ENCODE measurements at regions of chr5 and their contacts with region 1.

Region 1: GRCh38 chr5:132807163-132807838 is 5.8 kb upstream of the SOWAHA start:
- DNase-seq: peak; percentile 20
- ATAC-seq: peak; percentile 94
- H3K4me3 ChIP-seq: no peak overlapping the region
- H3K27ac ChIP-seq: no peak overlapping the region
- H3K4me1 ChIP-seq: no peaks in the 10 kb centered on the region
- H3K27me3 ChIP-seq: peaks cover 0 to 4% of the 10 kb centered on the region in 2 experiments; a peak in 2 of 4 replicates
- CTCF ChIP-seq: peak; percentile 3 to 45 (median 36); a peak in 3 of 6 replicates
- EP300 ChIP-seq: peak; percentile 17 to 59; a peak in 2 of 4 replicates
- POLR2A ChIP-seq: no peak
- RAD21 ChIP-seq: no peak

Region 2: GRCh38 chr5:132746954-132747615 is 60.2 kb before region 1 on chr5 and contains the start of gene CCNI2:
- CTCF ChIA-PET with region 1: interaction called, 45 read pairs
- POLR2A ChIA-PET with region 1: interaction called, 3 read pairs
- RAD21 ChIA-PET with region 1: interaction called, 17 read pairs
- SMC1A ChIA-PET with region 1: interaction called, 57 read pairs
- in situ Hi-C with region 1: no loop called
- intact Hi-C with region 1: no loop called
- DNase-seq: no peak
- ATAC-seq: peak; percentile 71
- H3K4me3 ChIP-seq: peak within 1 kb of the TSS; percentile 72
- H3K27ac ChIP-seq: no peak within 1 kb of the TSS
- H3K4me1 ChIP-seq: peaks cover 23% of the 10 kb centered on the region
- H3K27me3 ChIP-seq: no peaks in the 10 kb centered on the region
- CTCF ChIP-seq: peak; percentile 47 to 56 (median 53)
- EP300 ChIP-seq: no peak
- POLR2A ChIP-seq: peak; percentile 67
- RAD21 ChIP-seq: peak; percentile 20; the same call in 1 of the 2 replicates
- polyA plus RNA-seq, gene CCNI2: 3.1 to 8.0 TPM

Region 3: DNA sequence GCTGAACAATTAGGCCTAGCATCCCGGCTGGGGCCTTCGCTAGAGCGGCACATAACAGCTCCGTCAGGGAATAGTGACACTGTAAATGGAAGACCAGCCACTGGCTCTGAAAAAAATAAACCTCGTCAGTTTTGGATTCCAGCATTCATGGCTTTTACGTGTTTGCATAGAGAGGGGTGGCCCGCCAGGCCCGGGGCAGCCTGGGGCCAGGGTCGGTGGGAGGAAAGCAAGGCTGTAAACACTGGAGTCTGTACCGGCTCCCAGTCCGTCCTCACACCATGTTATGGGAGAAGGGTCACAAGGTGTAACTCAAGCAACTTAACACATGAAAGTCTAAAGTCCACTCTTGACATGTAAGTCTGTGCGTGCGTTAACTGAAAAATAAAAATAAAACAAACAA is 48.9 kb before region 1 on chr5:
- CTCF ChIA-PET with region 1: interaction called, 50 read pairs
- POLR2A ChIA-PET with region 1: interaction called, 6 read pairs
- RAD21 ChIA-PET with region 1: interaction called, 17 read pairs
- SMC1A ChIA-PET with region 1: interaction called, 57 read pairs
- in situ Hi-C with region 1: no loop called
- intact Hi-C with region 1: no loop called
- DNase-seq: no peak
- ATAC-seq: no peak
- H3K4me3 ChIP-seq: no peak overlapping the region
- H3K27ac ChIP-seq: no peak overlapping the region
- H3K4me1 ChIP-seq: no peaks in the 10 kb centered on the region
- H3K27me3 ChIP-seq: no peaks in the 10 kb centered on the region
- CTCF ChIP-seq: no peak
- EP300 ChIP-seq: no peak
- POLR2A ChIP-seq: no peak
- RAD21 ChIP-seq: no peak

Region 4: GRCh38 chr5:133015466-133015865 is 208.2 kb after region 1 on chr5:
- CTCF ChIA-PET with region 1: no interaction called
- POLR2A ChIA-PET with region 1: no interaction called
- RAD21 ChIA-PET with region 1: no interaction called
- SMC1A ChIA-PET with region 1: no interaction called
- in situ Hi-C with region 1: no loop called
- intact Hi-C with region 1: no loop called
- DNase-seq: no peak
- ATAC-seq: no peak
- H3K4me3 ChIP-seq: no peak overlapping the region
- H3K27ac ChIP-seq: no peak overlapping the region
- H3K4me1 ChIP-seq: no peaks in the 10 kb centered on the region
- H3K27me3 ChIP-seq: no peaks in the 10 kb centered on the region
- CTCF ChIP-seq: no peak
- EP300 ChIP-seq: no peak
- POLR2A ChIP-seq: no peak
- RAD21 ChIP-seq: no peak

Measured in GM12878 (cell line).